Breast epithelium (tissue), 4 donors: ENCODE measurements at regions of chr3 and their contacts with region 1.

Region 1: DNA sequence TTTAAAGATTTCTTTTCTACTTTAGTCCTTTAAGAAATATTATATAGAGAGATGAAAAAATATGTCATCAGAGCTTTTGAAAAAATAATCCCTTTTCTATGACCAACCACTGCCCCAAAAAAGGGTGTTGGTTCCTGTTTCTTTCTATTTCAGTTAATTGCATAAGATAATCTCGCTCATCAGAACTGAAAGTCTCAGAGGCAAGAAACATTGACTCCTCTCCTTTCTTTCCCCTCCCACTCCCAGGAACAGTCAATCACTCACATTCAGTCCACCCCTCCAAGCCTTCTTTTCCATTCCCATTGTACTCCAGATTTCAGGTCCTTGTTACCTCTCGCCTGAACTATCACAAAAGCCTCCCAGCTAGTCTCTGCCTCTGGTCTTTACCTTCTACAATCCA is 153.7 kb upstream of the ABI3BP start:
- DNase-seq: no peak
- H3K4me3 ChIP-seq: no peak overlapping the region
- H3K27ac ChIP-seq: no peak overlapping the region
- H3K4me1 ChIP-seq: no peaks in the 10 kb centered on the region
- H3K27me3 ChIP-seq: no peaks in the 10 kb centered on the region
- CTCF ChIP-seq: no peak
- POLR2A ChIP-seq: no peak

Region 2: DNA sequence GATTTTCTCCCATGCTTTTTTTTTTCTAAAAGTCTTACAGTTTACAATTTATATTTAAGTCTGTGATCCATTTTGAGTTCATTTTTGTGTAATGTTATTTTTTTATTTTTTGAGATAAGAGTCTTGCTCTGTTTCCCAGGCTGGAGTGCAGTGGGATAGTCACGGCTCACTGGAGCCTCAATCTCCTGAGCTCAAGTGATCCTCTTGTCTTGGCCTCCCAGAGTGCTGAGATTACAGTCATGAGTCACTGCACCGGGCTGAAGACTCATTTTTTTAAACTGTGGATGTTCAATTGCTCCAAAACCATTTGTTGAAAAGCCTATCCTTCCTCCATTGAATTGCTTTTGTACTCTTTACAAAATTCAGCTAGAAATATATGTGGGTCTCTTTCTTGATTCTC is 726.1 kb before region 1 on chr3:
- intact Hi-C with region 1: loop called (anchors 5 kb)
- DNase-seq: no peak
- H3K4me3 ChIP-seq: no peak overlapping the region
- H3K27ac ChIP-seq: no peak overlapping the region
- H3K4me1 ChIP-seq: no peaks in the 10 kb centered on the region
- H3K27me3 ChIP-seq: no peaks in the 10 kb centered on the region
- CTCF ChIP-seq: no peak
- POLR2A ChIP-seq: no peak

Region 3: GRCh38 chr3:101170062-101170771 is 23.3 kb after region 1 on chr3:
- intact Hi-C with region 1: loop called (anchors 1 kb)
- DNase-seq: no peak
- H3K4me3 ChIP-seq: no peak overlapping the region
- H3K27ac ChIP-seq: no peak overlapping the region
- H3K4me1 ChIP-seq: no peaks in the 10 kb centered on the region
- H3K27me3 ChIP-seq: no peaks in the 10 kb centered on the region
- CTCF ChIP-seq: no peak
- POLR2A ChIP-seq: no peak

Region 4: DNA sequence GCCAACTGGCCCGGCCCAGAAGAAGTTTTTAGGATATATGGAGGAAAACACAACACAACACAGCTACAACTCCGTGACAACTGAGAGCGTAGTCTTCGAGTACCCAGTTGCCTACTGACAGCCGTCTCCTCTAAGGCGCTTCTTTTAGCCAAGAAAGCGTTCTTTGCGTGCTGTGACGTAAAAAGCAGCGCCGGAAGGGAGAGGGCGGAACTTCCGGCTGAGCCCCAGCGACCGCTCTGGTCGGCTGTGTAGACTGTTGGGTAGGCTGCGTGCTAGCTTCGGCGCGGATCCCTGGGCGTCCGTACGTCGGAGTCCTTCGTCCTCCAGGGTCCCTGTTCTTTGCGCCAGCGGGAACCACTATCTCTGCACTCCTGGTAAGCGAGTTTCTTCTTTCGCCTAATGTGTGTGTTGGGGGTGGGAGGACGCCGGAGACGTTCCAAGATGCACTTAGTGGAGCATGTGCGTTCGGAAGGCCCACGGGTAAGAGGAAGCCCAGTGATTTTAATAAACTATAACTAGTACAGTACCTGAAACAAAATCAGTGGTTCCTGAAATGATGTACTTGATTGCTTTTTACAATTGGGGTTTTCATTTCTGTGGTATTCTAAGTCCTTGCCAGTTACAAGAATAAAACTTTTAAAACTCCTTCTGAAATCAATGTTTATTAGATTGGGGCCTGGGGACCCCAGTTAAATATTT is 414.8 kb after region 1 on chr3 and contains the start of gene TRMT10C:
- intact Hi-C with region 1: no loop called
- DNase-seq: peak; percentile 85 to 88
- H3K4me3 ChIP-seq: peak within 1 kb of the TSS; percentile 74 to 86 (median 85)
- H3K27ac ChIP-seq: peak within 1 kb of the TSS; percentile 90 to 91
- H3K4me1 ChIP-seq: peaks cover 0 to 9% of the 10 kb centered on the region in 2 donors
- H3K27me3 ChIP-seq: no peaks in the 10 kb centered on the region
- CTCF ChIP-seq: no peak
- POLR2A ChIP-seq: peak; percentile 77
- total RNA-seq, gene TRMT10C: 17.8 to 27.2 (median 25.6) TPM